ENCODE measurements at regions of chr16 and their contacts with region 1.

Region 1: GRCh38 chr16:16127469-16128116 is 95.7 kb downstream of the ABCC6 start:
- H3K4me3 Mint-ChIP-seq: no peak overlapping the region
- H3K27ac Mint-ChIP-seq: no peak overlapping the region
- H3K4me1 Mint-ChIP-seq: no peaks in the 10 kb centered on the region
- H3K27me3 Mint-ChIP-seq: no peaks in the 10 kb centered on the region

Region 2: DNA sequence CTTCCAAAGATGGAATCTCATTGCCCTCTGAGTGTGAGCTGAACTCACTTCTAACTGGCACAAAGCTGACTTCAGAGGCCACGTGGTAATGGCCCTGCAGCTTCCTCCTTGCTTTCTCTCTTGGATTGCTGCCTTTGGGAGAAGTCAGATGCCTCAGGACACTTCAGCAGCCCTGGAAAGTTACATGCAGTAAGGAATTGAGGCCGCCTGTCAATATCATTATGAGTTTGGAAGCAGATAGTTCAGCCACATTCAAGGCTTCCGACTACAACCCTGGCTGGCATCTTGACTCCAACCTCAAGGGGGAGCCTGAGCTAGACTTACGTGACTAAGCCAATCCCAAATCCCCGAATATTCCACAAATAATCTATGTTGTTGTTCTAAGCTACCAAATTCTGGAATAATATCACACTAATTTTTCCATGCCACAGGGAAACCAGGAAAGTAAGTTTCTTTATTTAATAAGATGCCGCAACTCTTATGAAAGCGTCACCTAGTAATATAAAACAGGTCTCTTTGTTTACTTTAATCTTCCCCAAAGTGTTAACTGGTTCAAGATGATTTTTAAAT is 252.8 kb before region 1 on chr16:
- intact Hi-C with region 1: loop called (anchors 5 kb)
- H3K4me3 Mint-ChIP-seq: no peak overlapping the region
- H3K27ac Mint-ChIP-seq: peak overlapping the region; percentile 57
- H3K4me1 Mint-ChIP-seq: peaks cover 10% of the 10 kb centered on the region
- H3K27me3 Mint-ChIP-seq: no peaks in the 10 kb centered on the region

Region 3: DNA sequence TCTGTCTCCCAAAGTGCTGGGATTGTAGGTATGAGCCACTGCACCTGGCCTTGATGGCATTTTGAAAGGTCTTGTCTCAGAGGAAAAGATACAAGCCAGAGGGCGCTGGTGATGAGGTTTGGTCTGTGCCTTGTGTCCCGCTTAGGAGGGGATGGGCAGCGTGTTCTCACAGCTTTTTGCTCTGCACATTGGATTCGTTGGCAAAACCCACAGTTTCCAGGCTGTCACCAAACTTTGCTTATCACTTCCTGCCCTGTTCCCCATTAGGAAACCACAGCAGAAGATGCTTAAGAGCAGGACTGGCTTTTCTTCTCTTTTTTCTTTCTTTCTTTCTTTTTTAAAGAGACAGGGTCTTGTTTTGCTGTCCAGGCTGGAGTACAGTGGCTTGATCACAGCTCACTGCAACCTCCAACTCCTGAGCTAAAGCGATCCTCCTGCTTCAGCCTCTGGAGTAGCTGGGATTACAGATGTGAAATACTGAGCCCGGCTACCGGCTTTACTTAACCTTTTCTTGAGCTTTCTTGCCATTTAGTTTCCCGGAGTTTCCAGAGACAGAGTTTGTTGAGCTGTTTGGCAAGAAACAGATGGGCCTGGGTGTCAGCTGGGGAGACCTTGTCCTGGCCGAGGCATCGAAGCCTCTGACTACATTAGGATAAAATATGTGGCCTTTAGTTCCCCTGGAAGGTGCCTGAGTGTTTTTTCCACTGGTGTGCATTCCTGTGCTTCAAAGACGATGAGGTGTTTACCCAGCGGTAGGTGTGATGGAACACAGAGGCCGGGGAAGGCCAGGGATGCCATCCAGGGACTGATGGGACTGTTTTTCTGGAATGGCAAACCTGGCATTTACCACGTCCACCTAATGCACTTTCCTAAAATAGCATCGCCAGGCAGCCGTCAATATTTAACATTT is 65.3 kb before region 1 on chr16:
- intact Hi-C with region 1: loop called (anchors 10 kb)
- H3K4me3 Mint-ChIP-seq: no peak overlapping the region
- H3K27ac Mint-ChIP-seq: no peak overlapping the region
- H3K4me1 Mint-ChIP-seq: peaks cover 16% of the 10 kb centered on the region
- H3K27me3 Mint-ChIP-seq: no peaks in the 10 kb centered on the region

Region 4: GRCh38 chr16:16191493-16192167 is 64.0 kb after region 1 on chr16:
- intact Hi-C with region 1: no loop called
- H3K4me3 Mint-ChIP-seq: no peak overlapping the region
- H3K27ac Mint-ChIP-seq: no peak overlapping the region
- H3K4me1 Mint-ChIP-seq: peaks cover 6% of the 10 kb centered on the region
- H3K27me3 Mint-ChIP-seq: no peaks in the 10 kb centered on the region